PC-3 (cell line): ENCODE measurements at regions of chr1 and their contacts with region 1.

Region 1: DNA sequence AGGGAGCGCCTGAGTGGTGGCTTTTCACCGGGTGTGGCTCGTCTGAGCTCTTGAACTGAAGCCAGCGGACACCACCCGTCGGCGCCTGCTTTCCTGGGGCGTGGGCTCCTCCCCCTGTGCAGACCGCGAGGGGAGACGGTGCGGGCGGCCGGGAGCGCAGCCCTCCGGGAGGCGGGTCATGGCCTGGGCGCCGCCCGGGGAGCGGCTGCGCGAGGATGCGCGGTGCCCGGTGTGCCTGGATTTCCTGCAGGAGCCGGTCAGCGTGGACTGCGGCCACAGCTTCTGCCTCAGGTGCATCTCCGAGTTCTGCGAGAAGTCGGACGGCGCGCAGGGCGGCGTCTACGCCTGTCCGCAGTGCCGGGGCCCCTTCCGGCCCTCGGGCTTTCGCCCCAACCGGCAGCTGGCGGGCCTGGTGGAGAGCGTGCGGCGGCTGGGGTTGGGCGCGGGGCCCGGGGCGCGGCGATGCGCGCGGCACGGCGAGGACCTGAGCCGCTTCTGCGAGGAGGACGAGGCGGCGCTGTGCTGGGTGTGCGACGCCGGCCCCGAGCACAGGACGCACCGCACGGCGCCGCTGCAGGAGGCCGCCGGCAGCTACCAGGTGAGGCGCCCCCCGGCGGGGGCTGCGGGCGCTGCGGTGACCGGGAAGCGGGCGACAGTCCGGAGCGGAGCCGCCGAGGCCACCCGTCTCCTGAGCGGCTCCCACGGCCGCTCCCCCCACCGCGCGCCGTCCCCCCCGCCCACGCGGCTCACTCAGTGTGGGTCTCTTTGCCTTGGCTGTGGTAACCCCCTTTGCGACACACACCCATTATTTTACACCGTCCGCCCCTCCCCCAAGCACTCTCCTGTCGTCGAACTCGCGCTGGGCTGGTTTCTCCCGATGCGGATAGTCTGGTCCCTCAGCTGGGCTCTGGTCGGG is at the start of gene TRIM58:
- DNase-seq: peak; percentile 96
- ATAC-seq: peak; percentile 83
- H3K4me3 ChIP-seq: peak within 1 kb of the TSS; percentile 72
- H3K27ac ChIP-seq: peak within 1 kb of the TSS; percentile 62
- H3K4me1 ChIP-seq: peaks cover 26% of the 10 kb centered on the region
- H3K27me3 ChIP-seq: no peaks in the 10 kb centered on the region
- CTCF ChIP-seq: peak; percentile 85
- total RNA-seq, gene TRIM58: 22.7 and 46.9 TPM in 2 replicates

Region 2: GRCh38 chr1:247528812-247529474 is 328.4 kb before region 1 on chr1:
- CTCF ChIA-PET with region 1: no interaction called
- POLR2A ChIA-PET with region 1: no interaction called
- intact Hi-C with region 1: loop called (anchors 1 kb)
- DNase-seq: peak; percentile 100
- ATAC-seq: peak; percentile 95
- H3K4me3 ChIP-seq: peak overlapping the region; percentile 3; the same call in 1 of the 2 replicates
- H3K27ac ChIP-seq: peak overlapping the region; percentile 71
- H3K4me1 ChIP-seq: peaks cover 23% of the 10 kb centered on the region
- H3K27me3 ChIP-seq: no peaks in the 10 kb centered on the region
- CTCF ChIP-seq: peak; percentile 42

Region 3: GRCh38 chr1:247746486-247746885 is 110.8 kb before region 1 on chr1:
- CTCF ChIA-PET with region 1: no interaction called
- POLR2A ChIA-PET with region 1: interaction called, 3 read pairs
- intact Hi-C with region 1: loop called (anchors 5 kb)
- DNase-seq: peak; percentile 85
- ATAC-seq: peak; percentile 70
- H3K4me3 ChIP-seq: no peak overlapping the region
- H3K27ac ChIP-seq: no peak overlapping the region
- H3K4me1 ChIP-seq: peaks cover 31% of the 10 kb centered on the region
- H3K27me3 ChIP-seq: no peaks in the 10 kb centered on the region
- CTCF ChIP-seq: no peak

Region 4: DNA sequence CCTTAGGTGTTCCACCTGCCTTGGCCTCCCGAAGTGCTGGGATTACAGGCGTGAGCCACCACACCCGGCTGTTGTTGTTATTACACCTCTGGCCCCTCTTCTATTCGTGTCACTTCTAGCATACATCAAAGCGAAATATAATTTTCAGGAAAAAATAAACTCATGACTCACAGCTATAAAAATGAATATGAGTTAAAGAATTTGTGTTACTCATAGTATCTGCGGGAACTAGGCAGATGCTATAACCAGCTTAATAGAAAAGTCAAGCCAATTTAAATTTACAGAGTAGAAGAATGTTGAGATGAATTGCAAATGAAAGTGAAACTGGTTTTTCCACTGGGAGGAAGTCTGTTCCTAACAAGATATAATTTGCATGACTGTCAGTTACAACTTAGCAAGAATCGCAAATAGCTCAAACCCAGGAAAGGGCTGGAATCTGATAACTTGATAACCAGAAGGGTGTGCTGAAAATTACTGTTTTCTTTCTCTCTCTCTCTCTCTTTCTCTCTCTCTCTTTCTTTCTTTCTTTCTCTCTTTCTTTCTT is 49.2 kb after region 1 on chr1:
- CTCF ChIA-PET with region 1: interaction called, 14 read pairs
- POLR2A ChIA-PET with region 1: no interaction called
- intact Hi-C with region 1: no loop called
- DNase-seq: peak; percentile 100
- ATAC-seq: peak; percentile 98
- H3K4me3 ChIP-seq: peak overlapping the region; percentile 55
- H3K27ac ChIP-seq: peak overlapping the region; percentile 68
- H3K4me1 ChIP-seq: peaks cover 20% of the 10 kb centered on the region
- H3K27me3 ChIP-seq: no peaks in the 10 kb centered on the region
- CTCF ChIP-seq: no peak

Region 5: DNA sequence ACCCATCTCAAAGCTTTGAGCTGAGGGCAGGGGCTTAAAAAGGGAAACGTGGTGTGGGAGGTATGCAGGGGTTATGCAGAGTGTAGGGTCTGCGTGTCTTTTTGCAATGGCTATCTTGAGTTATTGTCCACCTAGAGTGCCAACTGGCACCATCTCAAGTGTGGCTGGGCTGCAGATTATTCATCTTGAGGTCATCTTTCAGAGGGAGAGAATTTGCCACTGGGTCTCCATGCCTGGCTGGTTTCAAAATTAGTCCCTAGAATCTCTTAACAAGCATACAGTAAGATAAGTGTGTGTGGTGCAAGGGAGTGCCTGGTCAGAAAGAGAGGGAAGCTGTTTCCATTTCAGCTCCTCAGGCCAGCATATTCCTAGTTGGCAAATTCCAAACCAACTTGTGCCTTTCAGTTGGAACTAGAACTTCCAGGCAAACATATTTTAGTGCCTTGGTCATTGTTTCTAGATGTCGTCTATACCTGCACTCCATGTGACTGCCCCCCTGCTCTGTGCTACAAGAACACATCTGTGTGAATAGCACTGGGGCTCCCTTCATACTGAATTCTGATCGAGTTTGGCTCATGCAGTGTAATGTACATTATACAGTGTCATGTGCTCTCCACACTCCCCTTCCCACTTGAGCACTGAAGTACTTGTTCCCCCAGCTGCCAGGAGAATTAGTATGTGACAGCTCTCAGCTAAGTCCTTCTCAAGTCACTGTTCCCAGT is 57.8 kb after region 1 on chr1:
- CTCF ChIA-PET with region 1: interaction called, 5 read pairs
- POLR2A ChIA-PET with region 1: no interaction called
- intact Hi-C with region 1: loop called (anchors 2 kb)
- DNase-seq: peak; percentile 93
- ATAC-seq: peak; percentile 90
- H3K4me3 ChIP-seq: peak overlapping the region; percentile 39
- H3K27ac ChIP-seq: peak overlapping the region; percentile 45
- H3K4me1 ChIP-seq: peaks cover 25% of the 10 kb centered on the region
- H3K27me3 ChIP-seq: no peaks in the 10 kb centered on the region
- CTCF ChIP-seq: no peak